PC-3 (cell line): ENCODE measurements at regions of chr10 and their contacts with region 1.

Region 1: DNA sequence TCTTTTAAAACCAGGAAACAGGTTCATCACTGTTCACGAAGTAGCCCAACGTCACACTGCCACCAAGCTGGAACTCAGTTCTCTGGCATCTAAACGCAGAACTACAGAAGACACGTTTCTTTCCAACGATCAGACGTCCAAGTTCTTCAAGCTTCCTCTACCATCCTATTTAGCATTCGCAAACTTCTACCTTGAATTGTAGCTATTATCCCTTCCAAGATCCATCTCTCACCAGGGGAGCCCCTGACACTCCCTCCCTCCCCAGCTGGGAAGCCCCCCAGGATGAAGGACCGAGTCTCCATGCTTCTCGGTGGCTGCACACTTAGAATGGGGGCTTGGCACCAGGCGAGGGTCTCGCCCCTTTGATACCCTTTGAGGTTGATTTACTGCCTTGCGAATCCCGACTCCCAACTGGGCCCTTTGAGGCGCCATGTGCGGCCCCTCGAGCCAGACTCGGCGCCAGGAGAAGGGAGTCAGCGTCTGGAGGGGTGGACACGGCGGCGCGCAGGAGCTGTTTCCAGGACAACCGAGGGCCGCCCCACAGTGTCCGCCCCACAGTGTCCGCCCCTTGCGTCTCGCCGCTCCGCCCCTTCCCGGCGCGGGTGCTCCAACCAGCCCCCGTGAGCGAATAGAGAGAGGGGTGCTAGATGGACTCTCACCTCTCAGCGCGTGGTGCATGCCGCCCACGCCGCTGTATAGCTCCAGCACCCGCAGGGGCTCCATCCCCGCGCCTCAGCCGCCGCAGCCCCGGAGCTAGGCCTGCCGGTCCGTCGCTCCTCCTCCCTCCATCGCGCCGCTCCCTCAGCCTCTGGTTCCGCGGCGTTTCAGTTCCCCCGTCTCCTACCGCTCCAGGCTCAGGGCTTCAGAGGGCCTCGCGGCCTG is at the start of gene TRDMT1:
- DNase-seq: peak; percentile 55
- ATAC-seq: peak; percentile 95
- H3K4me3 ChIP-seq: peak within 1 kb of the TSS; percentile 80
- H3K27ac ChIP-seq: peak within 1 kb of the TSS; percentile 75
- H3K4me1 ChIP-seq: peaks cover 14% of the 10 kb centered on the region
- H3K27me3 ChIP-seq: no peaks in the 10 kb centered on the region
- CTCF ChIP-seq: no peak
- total RNA-seq, gene TRDMT1: 1.3 and 2.0 TPM in 2 replicates

Region 2: DNA sequence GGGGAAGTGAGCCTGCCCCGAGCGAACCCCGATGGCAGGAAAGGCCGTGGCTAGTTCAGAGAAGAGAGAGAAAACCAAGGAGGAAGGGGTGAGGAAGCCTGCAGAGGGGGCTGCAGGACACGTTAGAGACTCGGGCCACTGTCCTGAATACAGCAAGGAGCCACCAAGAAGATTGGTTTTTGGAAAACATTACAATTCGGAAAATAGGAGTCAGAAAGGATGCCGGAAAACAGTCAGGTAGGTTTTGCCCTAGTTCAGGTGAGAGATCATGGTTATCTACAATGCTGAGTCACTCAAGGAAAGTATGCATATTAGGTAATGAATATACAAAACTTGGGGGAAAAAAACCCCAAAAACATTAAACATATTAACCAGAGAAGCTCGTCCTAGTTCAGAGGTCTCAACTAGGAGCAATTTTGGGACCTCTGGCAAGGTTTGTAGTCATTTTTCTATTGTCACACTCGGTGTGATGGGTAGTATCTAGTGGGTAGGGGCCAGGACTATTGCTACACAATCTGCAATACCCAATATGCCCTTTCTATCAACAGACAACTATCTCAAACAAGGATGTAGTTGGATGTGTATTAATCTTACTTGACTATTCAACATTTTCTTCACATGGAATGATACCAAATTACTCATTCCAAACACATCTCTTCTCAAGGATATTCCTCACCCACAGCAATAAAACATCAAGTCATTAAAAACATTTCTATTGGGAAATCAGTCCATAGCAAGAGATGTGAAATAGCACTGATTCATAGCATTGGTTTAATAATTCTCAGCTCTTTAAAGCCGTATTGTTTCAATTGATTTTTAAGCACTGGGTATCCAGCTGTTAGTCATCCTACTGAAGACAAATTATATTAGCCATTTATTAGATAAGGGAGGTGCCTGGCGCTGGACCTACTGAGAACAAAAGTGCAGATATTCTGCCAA is 309.5 kb before region 1 on chr10:
- CTCF ChIA-PET with region 1: no interaction called
- POLR2A ChIA-PET with region 1: interaction called, 10 read pairs
- intact Hi-C with region 1: no loop called
- DNase-seq: peak; percentile 77
- ATAC-seq: peak; percentile 75
- H3K4me3 ChIP-seq: no peak overlapping the region
- H3K27ac ChIP-seq: peak overlapping the region; percentile 82
- H3K4me1 ChIP-seq: peaks cover 28% of the 10 kb centered on the region
- H3K27me3 ChIP-seq: no peaks in the 10 kb centered on the region
- CTCF ChIP-seq: no peak

Region 3: DNA sequence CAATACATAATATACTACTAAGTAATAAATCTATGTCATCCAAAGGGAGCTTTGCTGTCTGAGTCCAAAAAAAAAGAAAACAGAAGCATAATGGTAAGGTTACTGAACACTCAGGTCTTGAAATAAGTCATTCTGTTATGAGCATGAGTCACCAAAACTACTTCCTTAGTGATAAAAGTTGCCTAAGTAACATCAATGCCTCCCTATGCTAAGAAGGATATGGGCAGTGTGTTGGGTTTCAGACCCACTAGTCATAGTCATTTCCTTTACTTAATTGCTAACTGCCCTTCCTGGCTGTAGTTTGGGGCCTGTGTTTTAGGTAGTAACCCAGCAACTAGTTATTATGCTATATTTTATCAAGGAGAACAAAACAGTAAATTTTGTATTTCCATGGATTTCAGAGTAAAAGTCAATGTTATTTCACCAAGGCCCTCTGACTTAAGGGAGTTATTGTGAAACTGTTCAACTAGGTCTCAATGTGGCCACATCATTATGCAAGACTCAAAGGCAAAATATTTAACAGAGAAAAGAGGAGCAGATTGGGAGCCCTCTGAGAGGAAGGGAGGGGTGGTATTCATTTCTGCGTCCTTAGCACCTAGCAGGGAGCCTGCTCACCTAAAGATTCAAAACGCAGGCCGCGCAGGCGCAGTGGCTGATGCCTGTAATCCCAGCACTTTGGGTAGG is 15.2 kb after region 1 on chr10:
- CTCF ChIA-PET with region 1: interaction called, 4 read pairs
- POLR2A ChIA-PET with region 1: interaction called, 5 read pairs
- intact Hi-C with region 1: loop called (anchors 2 kb)
- DNase-seq: peak; percentile 85
- ATAC-seq: peak; percentile 84
- H3K4me3 ChIP-seq: peak overlapping the region; percentile 51; the same call in 1 of the 2 replicates
- H3K27ac ChIP-seq: peak overlapping the region; percentile 99
- H3K4me1 ChIP-seq: peaks cover 53% of the 10 kb centered on the region
- H3K27me3 ChIP-seq: no peaks in the 10 kb centered on the region
- CTCF ChIP-seq: no peak

Region 4: GRCh38 chr10:17228091-17228940 is 27.2 kb after region 1 on chr10 and contains the start of gene VIM:
- CTCF ChIA-PET with region 1: interaction called, 4 read pairs
- POLR2A ChIA-PET with region 1: interaction called, 8 read pairs
- intact Hi-C with region 1: loop called (anchors 1 kb)
- DNase-seq: peak; percentile 82
- ATAC-seq: peak; percentile 66
- H3K4me3 ChIP-seq: peak within 1 kb of the TSS; percentile 87
- H3K27ac ChIP-seq: peak within 1 kb of the TSS; percentile 92
- H3K4me1 ChIP-seq: peaks cover 10% of the 10 kb centered on the region
- H3K27me3 ChIP-seq: no peaks in the 10 kb centered on the region
- CTCF ChIP-seq: no peak
- total RNA-seq, gene VIM: 469 and 506 TPM in 2 replicates